CD8-positive, alpha-beta T cell (primary cell): ENCODE measurements at regions of chr17 and their contacts with region 1.

Region 1: GRCh38 chr17:31508288-31509094 is 117.0 kb downstream of the RAB11FIP4 start:
- DNase-seq: peak; percentile 56 to 95 (median 73)
- ATAC-seq: peak; percentile 91
- H3K4me3 ChIP-seq: peak overlapping the region; percentile 46 to 48
- H3K4me3 Mint-ChIP-seq: peak overlapping the region; percentile 91
- H3K27ac ChIP-seq: peak overlapping the region; percentile 66 to 92
- H3K27ac Mint-ChIP-seq: peak overlapping the region; percentile 98
- H3K4me1 ChIP-seq: peaks cover 59% of the 10 kb centered on the region
- H3K4me1 Mint-ChIP-seq: peaks cover 73% of the 10 kb centered on the region
- H3K27me3 ChIP-seq: no peaks in the 10 kb centered on the region
- H3K27me3 Mint-ChIP-seq: no peaks in the 10 kb centered on the region
- CTCF ChIP-seq: peak; percentile 56

Region 2: DNA sequence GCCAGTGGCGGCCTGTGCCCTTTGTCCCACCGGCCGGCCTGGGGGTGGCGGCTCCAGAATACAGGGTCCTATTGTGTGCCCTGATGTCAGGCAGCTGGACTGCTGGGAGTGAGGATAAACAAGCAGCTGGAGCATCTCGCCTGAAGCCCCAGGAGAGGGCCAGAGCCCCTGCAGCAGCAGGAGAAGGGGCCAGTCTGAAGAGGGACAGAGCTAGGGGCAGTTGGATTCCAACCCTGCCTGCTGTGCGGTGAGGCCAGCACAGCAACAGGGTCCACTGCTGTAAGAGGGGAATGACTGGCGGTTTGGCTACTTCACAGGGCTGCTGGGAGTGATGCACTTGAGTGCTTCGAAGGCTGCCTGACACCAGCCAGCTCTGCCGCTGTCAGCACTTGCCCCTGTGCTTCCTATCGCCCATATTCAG is 92.0 kb before region 1 on chr17:
- CTCF ChIA-PET with region 1: no interaction called
- POLR2A ChIA-PET with region 1: no interaction called
- intact Hi-C with region 1: no loop called
- DNase-seq: no peak
- ATAC-seq: no peak
- H3K4me3 ChIP-seq: no peak overlapping the region
- H3K4me3 Mint-ChIP-seq: no peak overlapping the region
- H3K27ac ChIP-seq: no peak overlapping the region
- H3K27ac Mint-ChIP-seq: peak overlapping the region; percentile 27
- H3K4me1 ChIP-seq: no peaks in the 10 kb centered on the region
- H3K4me1 Mint-ChIP-seq: no peaks in the 10 kb centered on the region
- H3K27me3 ChIP-seq: no peaks in the 10 kb centered on the region
- H3K27me3 Mint-ChIP-seq: no peaks in the 10 kb centered on the region
- CTCF ChIP-seq: no peak

Region 3: DNA sequence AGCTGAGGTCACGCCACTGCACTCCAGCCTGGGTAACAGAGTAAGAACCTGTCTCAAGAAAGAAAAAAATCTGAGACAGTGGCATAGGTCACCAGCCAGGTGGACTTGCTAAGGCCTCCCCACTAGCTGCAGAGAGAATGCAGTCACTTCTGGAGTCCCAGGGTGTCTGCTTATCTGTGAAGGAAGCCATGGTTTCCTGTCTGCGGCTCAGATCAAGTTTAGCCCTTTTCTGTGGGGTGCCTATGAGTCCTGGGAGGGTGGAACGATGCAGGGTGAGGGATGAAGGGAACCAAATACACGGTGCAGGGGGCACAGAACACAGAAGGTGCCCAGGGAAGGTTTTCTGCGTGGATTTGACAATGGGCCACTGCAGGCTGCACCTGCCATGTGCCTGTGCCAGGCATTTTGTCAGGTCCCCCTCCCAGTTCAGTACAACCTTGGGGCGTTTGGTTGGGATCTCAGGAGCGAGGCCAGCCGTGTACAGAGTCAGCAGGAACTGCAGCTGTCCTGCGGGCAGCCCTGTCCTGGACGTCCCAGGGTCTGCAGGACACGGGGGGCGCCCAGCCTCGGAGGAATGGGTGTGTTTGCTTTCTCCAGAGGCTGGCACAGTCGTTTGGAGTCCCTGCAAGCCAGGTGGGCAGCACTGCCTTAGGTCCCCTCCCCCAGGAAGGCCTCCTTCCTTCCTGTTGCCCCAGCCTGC is 75.2 kb before region 1 on chr17:
- CTCF ChIA-PET with region 1: interaction called, 33 read pairs
- POLR2A ChIA-PET with region 1: no interaction called
- intact Hi-C with region 1: loop called in 1 of 2 experiments (anchors 5 kb)
- DNase-seq: peak; percentile 20 to 71 (median 55)
- ATAC-seq: peak; percentile 89
- H3K4me3 ChIP-seq: no peak overlapping the region
- H3K4me3 Mint-ChIP-seq: peak overlapping the region; percentile 62
- H3K27ac ChIP-seq: no peak overlapping the region
- H3K27ac Mint-ChIP-seq: peak overlapping the region; percentile 33
- H3K4me1 ChIP-seq: peaks cover 16% of the 10 kb centered on the region
- H3K4me1 Mint-ChIP-seq: peaks cover 20% of the 10 kb centered on the region
- H3K27me3 ChIP-seq: peaks cover 0 to 2% of the 10 kb centered on the region in 2 experiments
- H3K27me3 Mint-ChIP-seq: peaks cover 13% of the 10 kb centered on the region
- CTCF ChIP-seq: no peak

Region 4: DNA sequence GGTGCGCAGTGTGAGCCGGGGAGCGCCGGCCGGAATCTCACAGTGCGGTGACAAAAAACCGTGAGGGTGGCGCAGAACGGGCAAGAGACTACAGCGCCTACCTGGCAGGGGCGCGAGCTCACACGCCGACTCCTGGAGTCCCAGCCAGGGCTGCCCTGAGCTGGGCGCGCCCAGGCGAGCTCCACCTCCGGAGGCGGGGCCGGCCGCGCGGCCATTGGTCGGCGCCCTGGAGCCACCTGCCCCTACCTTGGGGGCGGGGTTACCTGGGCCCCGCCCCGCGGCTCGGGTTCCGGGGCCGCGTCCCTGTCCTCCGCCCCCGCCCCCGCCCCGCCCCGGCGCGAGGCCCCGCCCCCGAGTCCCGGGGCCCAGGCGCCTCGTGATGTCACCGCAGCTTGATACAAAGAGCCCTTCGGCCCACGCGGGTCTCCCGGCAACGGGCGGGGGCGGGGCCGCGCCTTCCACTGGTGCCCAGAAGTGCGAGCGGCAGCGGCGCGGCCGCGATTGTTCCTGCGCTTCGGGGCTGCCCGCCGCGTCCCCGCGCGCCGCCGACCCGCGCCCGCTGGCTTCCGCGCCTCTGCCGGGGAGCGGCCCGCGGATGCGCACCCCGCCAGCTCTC is 20.7 kb before region 1 on chr17:
- CTCF ChIA-PET with region 1: interaction called, 48 read pairs
- POLR2A ChIA-PET with region 1: interaction called, 172 read pairs
- intact Hi-C with region 1: loop called (anchors 1 kb)
- DNase-seq: peak; percentile 92 to 98 (median 96)
- ATAC-seq: peak; percentile 91
- H3K4me3 ChIP-seq: peak overlapping the region; percentile 80 to 83
- H3K4me3 Mint-ChIP-seq: peak overlapping the region; percentile 92
- H3K27ac ChIP-seq: peak overlapping the region; percentile 85 to 89
- H3K27ac Mint-ChIP-seq: peak overlapping the region; percentile 96
- H3K4me1 ChIP-seq: peaks cover 49% of the 10 kb centered on the region
- H3K4me1 Mint-ChIP-seq: peaks cover 50% of the 10 kb centered on the region
- H3K27me3 ChIP-seq: no peaks in the 10 kb centered on the region
- H3K27me3 Mint-ChIP-seq: no peaks in the 10 kb centered on the region
- CTCF ChIP-seq: no peak

Region 5: DNA sequence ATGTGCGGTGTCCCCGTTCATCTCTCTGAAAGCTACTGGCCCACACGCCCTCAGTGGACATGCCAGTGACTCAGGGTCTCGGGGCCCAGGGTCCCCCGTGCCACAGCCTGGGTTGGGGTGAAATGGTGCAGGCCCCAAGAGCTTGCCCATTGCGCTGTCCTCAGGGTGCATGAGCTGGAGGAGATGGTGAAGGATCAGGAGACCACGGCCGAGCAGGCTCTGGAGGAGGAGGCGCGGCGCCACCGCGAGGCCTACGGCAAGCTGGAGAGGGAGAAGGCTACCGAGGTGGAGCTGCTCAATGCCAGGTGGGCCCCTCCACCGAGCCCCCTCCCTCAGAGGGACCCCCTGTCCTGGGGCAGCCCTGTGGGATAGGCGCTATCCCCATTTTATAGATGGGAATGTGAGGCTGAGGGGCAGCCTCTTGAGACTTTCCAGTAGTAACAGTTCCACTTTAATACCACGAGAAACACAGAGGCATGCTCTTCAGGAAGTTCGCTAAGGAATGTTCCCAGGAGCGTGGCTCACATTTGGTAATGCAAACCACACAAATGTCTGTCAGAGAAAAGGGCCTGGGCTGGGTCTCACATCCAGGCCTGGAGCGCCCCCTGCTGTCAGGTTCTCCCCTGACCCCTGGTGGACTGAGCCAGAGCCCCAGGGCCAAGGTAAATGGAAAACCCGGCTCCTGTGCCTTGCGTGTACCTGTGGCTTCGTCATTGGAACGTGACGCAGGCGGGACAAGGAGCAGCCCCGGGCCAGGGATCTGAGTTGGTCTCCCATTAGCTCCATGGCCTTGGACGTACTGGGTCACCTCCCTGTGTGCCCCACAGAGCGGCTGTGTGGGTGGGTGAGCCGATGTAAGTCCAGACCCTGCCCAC is 16.7 kb after region 1 on chr17:
- CTCF ChIA-PET with region 1: interaction called, 50 read pairs
- POLR2A ChIA-PET with region 1: no interaction called
- intact Hi-C with region 1: loop called in 1 of 2 experiments (anchors 1 kb)
- DNase-seq: peak; percentile 75 to 95 (median 83)
- ATAC-seq: peak; percentile 80
- H3K4me3 ChIP-seq: no peak overlapping the region
- H3K4me3 Mint-ChIP-seq: no peak overlapping the region
- H3K27ac ChIP-seq: no peak overlapping the region
- H3K27ac Mint-ChIP-seq: no peak overlapping the region
- H3K4me1 ChIP-seq: no peaks in the 10 kb centered on the region
- H3K4me1 Mint-ChIP-seq: peaks cover 1% of the 10 kb centered on the region
- H3K27me3 ChIP-seq: no peaks in the 10 kb centered on the region
- H3K27me3 Mint-ChIP-seq: no peaks in the 10 kb centered on the region
- CTCF ChIP-seq: peak; percentile 90

Region 6: GRCh38 chr17:32311028-32311536 is 802.6 kb after region 1 on chr17:
- CTCF ChIA-PET with region 1: no interaction called
- POLR2A ChIA-PET with region 1: no interaction called
- intact Hi-C with region 1: no loop called
- DNase-seq: no peak
- ATAC-seq: no peak
- H3K4me3 ChIP-seq: no peak overlapping the region
- H3K4me3 Mint-ChIP-seq: no peak overlapping the region
- H3K27ac ChIP-seq: no peak overlapping the region
- H3K27ac Mint-ChIP-seq: no peak overlapping the region
- H3K4me1 ChIP-seq: no peaks in the 10 kb centered on the region
- H3K4me1 Mint-ChIP-seq: no peaks in the 10 kb centered on the region
- H3K27me3 ChIP-seq: no peaks in the 10 kb centered on the region
- H3K27me3 Mint-ChIP-seq: peaks cover 14% of the 10 kb centered on the region
- CTCF ChIP-seq: no peak